ENCODE measurements at regions of chrX and their contacts with region 1.

Region 1: GRCh38 chrX:48945516-48946348 is 11.7 kb downstream of the OTUD5 start:
- DNase-seq: peak; percentile 70
- H3K4me3 Mint-ChIP-seq: no peak overlapping the region
- H3K27ac Mint-ChIP-seq: peak overlapping the region; percentile 83
- H3K4me1 Mint-ChIP-seq: peaks cover 53% of the 10 kb centered on the region
- H3K27me3 Mint-ChIP-seq: no peaks in the 10 kb centered on the region

Region 2: DNA sequence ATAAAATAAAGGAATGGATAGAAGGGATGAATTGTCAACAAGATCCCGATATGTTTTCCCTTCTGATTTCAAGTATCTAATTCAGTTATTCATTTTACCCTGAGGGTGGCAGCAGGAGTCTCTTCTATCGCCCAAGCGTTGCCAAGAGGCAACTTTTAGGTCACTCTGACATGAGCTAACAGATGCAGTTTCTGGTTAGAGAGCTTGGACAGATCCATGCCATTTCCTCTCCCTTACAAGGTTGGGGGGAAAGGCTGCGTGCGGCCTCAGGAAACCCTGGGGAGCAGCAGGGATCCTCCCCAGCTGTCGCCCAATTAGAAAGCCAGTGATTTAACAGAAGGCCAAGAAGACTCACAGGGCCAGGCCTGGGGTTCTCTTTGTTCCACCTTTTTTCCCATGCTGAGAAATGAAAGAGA is 297.4 kb before region 1 on chrX:
- CTCF ChIA-PET with region 1: interaction called, 3 read pairs
- intact Hi-C with region 1: loop called (anchors 1 kb)
- DNase-seq: peak; percentile 53
- H3K4me3 Mint-ChIP-seq: no peak overlapping the region
- H3K27ac Mint-ChIP-seq: no peak overlapping the region
- H3K4me1 Mint-ChIP-seq: peaks cover 11% of the 10 kb centered on the region
- H3K27me3 Mint-ChIP-seq: no peaks in the 10 kb centered on the region